AG04449 (cell line): ENCODE measurements at regions of chr4 and their contacts with region 1.

Region 1: GRCh38 chr4:52588097-52588782 is 70.9 kb downstream of the USP46 start:
- DNase-seq: no peak
- H3K4me3 ChIP-seq: no peak overlapping the region
- CTCF ChIP-seq: peak; percentile 53

Region 2: GRCh38 chr4:52358883-52359321 is 229.3 kb before region 1 on chr4:
- CTCF ChIA-PET with region 1: no interaction called
- POLR2A ChIA-PET with region 1: no interaction called
- DNase-seq: no peak
- H3K4me3 ChIP-seq: no peak overlapping the region
- CTCF ChIP-seq: no peak

Region 3: GRCh38 chr4:52576857-52577623 is 11.2 kb before region 1 on chr4:
- CTCF ChIA-PET with region 1: interaction called, 11 read pairs
- POLR2A ChIA-PET with region 1: no interaction called
- DNase-seq: peak; percentile 31
- H3K4me3 ChIP-seq: no peak overlapping the region
- CTCF ChIP-seq: no peak

Region 4: GRCh38 chr4:52600275-52600674 is 12.0 kb after region 1 on chr4:
- CTCF ChIA-PET with region 1: no interaction called
- POLR2A ChIA-PET with region 1: no interaction called
- DNase-seq: no peak
- H3K4me3 ChIP-seq: no peak overlapping the region
- CTCF ChIP-seq: no peak

Region 5: GRCh38 chr4:52643785-52644244 is 55.6 kb after region 1 on chr4:
- CTCF ChIA-PET with region 1: no interaction called
- POLR2A ChIA-PET with region 1: no interaction called
- DNase-seq: no peak
- H3K4me3 ChIP-seq: no peak overlapping the region
- CTCF ChIP-seq: no peak